ENCODE measurements at regions of chr6 and their contacts with region 1.

Region 1: GRCh38 chr6:53484476-53485280 is 60.2 kb downstream of the GCLC start:
- DNase-seq: peak in 1 of 2 donors; percentile 54
- ATAC-seq: peak; percentile 89
- H3K4me3 ChIP-seq: no peak overlapping the region
- H3K27ac ChIP-seq: no peak overlapping the region
- H3K4me1 ChIP-seq: no peaks in the 10 kb centered on the region
- H3K27me3 ChIP-seq: peaks cover 0 to 2% of the 10 kb centered on the region in 2 donors

Region 2: GRCh38 chr6:53171605-53172446 is 312.9 kb before region 1 on chr6:
- intact Hi-C with region 1: loop called (anchors 1 kb)
- DNase-seq: peak; percentile 90 to 96
- ATAC-seq: peak; percentile 98
- H3K4me3 ChIP-seq: no peak overlapping the region
- H3K27ac ChIP-seq: no peak overlapping the region
- H3K4me1 ChIP-seq: no peaks in the 10 kb centered on the region
- H3K27me3 ChIP-seq: no peaks in the 10 kb centered on the region

Region 3: DNA sequence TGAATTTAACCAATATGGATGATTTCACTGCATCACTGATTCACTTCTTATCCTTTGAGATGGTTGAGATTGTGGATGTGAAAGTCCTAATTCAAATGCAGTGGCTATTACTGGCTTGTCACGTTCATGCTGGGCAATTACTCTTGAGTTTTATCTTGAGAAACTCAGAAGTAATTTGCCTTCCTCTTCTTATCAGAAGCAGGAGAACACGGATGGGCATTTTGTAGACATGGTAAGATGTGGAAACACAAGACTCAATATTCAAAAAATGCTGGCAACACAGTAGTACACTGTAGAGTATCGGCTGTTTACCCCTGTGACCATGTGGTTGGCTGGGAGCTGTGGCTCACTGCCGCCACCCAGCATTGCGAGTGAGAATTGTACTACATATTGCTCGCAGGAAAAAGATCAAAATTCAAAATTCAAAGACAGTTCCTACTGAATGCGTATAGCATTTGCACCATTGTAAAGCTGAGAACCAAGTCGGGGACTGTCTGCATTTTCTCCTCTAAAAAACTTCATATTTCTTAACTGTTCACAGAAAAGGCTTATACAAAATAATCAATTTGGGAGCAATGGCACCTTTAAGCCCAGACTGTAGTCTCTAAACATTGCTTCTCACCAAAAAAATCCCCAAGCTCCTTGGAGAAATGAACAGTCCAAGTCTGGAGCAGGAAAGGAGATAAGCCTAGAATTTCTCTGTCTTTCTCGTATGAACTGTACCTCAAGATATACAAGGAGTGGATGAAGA is 74.0 kb before region 1 on chr6:
- intact Hi-C with region 1: loop called (anchors 5 to 10 kb)
- DNase-seq: peak in 1 of 2 donors; percentile 47
- ATAC-seq: no peak
- H3K4me3 ChIP-seq: no peak overlapping the region
- H3K27ac ChIP-seq: no peak overlapping the region
- H3K4me1 ChIP-seq: no peaks in the 10 kb centered on the region
- H3K27me3 ChIP-seq: no peaks in the 10 kb centered on the region

Region 4: DNA sequence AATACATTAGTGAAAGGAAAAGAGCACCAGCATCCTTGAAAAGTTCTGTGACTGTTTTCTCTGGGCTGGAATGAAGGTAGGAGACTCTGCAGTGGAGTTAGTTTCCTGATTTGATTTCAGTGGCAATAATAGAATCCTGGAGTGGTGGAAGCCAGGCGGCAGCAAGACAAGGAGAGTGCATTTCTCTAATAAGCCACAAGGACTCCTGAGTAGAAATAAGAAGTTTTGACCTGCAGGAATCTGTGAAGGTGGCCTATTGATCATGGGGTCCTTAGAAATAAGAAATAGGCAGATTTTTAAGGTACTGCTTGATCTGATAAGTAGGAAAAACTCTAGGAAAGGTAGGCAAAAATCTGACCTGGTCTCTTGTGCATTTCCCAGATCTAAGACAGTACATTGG is 67.5 kb before region 1 on chr6:
- intact Hi-C with region 1: loop called (anchors 5 to 10 kb)
- DNase-seq: no peak
- ATAC-seq: no peak
- H3K4me3 ChIP-seq: no peak overlapping the region
- H3K27ac ChIP-seq: no peak overlapping the region
- H3K4me1 ChIP-seq: no peaks in the 10 kb centered on the region
- H3K27me3 ChIP-seq: no peaks in the 10 kb centered on the region

Measured in aorta (tissue), 5 donors.